Prostate gland (tissue), 2 donors: ENCODE measurements at regions of chr2 and their contacts with region 1.

Region 1: DNA sequence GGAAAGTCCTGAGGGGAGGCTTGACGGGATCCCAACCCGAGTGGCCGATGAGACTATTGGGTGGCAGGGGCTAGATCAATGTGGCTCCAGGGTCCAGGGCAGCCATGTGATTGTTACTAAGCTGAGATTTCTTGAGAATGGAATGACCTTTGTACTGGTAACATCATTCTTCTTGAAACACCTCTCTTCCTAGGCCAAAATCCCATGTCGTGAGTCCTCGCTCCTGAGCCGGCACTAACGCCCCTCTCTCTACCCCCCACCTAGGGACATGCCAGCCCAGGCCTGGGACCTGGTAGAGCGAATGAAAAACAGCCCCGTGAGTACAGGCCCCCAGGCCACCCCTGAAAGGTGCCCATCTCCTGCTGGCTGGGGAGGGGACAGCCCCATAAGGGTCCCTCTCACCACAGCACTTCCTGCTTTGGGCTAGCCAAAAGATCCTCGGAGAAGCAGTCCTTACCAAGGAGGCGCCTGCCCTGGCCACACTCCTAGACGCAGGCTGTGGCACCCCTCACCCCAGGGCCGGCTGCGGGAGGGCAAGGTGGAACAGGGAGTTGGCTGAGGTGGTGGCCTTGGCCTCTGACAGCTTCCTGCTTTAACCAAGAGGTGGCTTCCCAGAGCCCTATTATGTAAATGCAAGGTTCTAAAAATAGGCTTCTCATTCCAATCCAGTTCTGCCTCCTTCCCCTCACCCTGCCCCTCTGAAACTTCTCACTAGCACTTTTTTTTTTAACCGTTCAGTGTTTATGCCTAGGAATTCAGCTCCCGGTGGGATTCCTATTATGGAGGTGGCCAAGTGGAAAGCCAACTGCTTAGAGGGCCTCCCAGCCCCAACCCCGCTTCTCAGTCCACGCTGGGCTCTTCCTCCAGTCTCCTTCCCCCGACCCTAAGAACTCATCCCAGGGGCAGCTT is 126.6 kb upstream of the PPP1CB start:
- DNase-seq: no peak
- H3K4me3 ChIP-seq: no peak overlapping the region
- H3K27ac ChIP-seq: peak overlapping the region; percentile 84 to 90
- H3K4me1 ChIP-seq: peaks cover 6% of the 10 kb centered on the region
- H3K27me3 ChIP-seq: no peaks in the 10 kb centered on the region
- CTCF ChIP-seq: no peak
- POLR2A ChIP-seq: peak; percentile 19

Region 2: GRCh38 chr2:28606986-28607441 is 18.0 kb before region 1 on chr2:
- intact Hi-C with region 1: loop called (anchors 1 kb)
- DNase-seq: no peak
- H3K4me3 ChIP-seq: no peak overlapping the region
- H3K27ac ChIP-seq: peak overlapping the region; percentile 72 to 76
- H3K4me1 ChIP-seq: peaks cover 21% of the 10 kb centered on the region
- H3K27me3 ChIP-seq: no peaks in the 10 kb centered on the region
- CTCF ChIP-seq: no peak
- POLR2A ChIP-seq: no peak

Region 3: GRCh38 chr2:28661589-28662001 is 36.5 kb after region 1 on chr2:
- intact Hi-C with region 1: loop called (anchors 5 kb)
- DNase-seq: peak; percentile 73
- H3K4me3 ChIP-seq: no peak overlapping the region
- H3K27ac ChIP-seq: peak overlapping the region; percentile 66 to 68
- H3K4me1 ChIP-seq: peaks cover 2% of the 10 kb centered on the region
- H3K27me3 ChIP-seq: no peaks in the 10 kb centered on the region
- CTCF ChIP-seq: no peak
- POLR2A ChIP-seq: no peak

Region 4: GRCh38 chr2:29053670-29054400 is 428.8 kb after region 1 on chr2:
- intact Hi-C with region 1: no loop called
- DNase-seq: no peak
- H3K4me3 ChIP-seq: no peak overlapping the region
- H3K27ac ChIP-seq: no peak overlapping the region
- H3K4me1 ChIP-seq: no peaks in the 10 kb centered on the region
- H3K27me3 ChIP-seq: no peaks in the 10 kb centered on the region
- CTCF ChIP-seq: peak in 1 of 4 experiments; percentile 24
- POLR2A ChIP-seq: no peak